Calu3 (cell line): ENCODE measurements at regions of chr2 and their contacts with region 1.

Region 1: DNA sequence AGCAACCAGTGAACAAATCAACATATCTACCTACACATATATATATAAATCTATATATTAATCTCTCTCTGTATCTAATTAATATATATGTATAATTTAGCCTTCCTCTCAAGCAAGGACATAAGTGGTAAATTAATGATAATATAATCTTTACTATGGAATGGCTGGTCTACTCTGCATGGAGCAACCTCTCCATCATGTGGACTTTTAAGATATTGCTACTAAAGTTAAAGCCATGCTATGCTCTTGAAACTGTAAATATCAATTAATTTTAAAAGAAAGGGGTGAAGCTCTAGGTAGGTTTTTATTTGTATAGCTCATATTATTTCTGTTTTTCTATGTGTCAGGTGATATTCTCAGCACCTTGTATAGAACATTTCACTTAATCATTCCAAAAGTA is 147.0 kb downstream of the PPP1R1C start:
- DNase-seq: no peak
- H3K4me3 Mint-ChIP-seq: no peak overlapping the region
- H3K27ac Mint-ChIP-seq: no peak overlapping the region
- H3K4me1 Mint-ChIP-seq: no peaks in the 10 kb centered on the region
- H3K27me3 Mint-ChIP-seq: no peaks in the 10 kb centered on the region
- CTCF ChIP-seq: peak; percentile 18

Region 2: DNA sequence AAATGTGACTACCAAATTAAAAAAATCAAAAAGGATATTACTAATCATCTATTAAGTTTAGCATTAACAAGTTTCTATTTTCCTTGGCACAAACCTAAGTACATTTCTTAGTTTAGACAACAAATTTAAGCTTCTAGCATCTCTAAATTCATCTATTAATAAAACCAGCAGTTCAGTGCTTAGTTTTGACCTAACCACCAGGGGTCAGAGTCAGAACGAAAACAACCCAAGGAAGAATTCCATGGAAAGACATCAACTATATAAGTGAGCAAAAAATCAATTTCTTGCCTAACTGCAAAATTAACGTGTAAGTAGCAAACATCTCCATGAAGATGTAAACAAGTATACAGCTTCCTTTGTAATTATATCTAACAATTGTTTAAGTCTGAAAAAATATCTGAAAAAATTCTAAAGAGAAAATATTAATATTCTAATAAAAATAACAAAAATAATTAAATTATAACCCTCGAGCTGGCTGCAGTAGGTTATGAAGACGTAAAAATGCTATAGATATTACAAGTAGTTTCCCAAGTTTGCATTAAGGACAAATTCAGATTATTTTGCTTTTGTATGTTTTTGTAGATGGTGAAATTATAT is 559.4 kb before region 1 on chr2:
- CTCF ChIA-PET with region 1: interaction called, 3 read pairs
- intact Hi-C with region 1: loop called (anchors 1 kb)
- DNase-seq: peak; percentile 52
- H3K4me3 Mint-ChIP-seq: no peak overlapping the region
- H3K27ac Mint-ChIP-seq: no peak overlapping the region
- H3K4me1 Mint-ChIP-seq: no peaks in the 10 kb centered on the region
- H3K27me3 Mint-ChIP-seq: no peaks in the 10 kb centered on the region
- CTCF ChIP-seq: peak; percentile 52

Region 3: DNA sequence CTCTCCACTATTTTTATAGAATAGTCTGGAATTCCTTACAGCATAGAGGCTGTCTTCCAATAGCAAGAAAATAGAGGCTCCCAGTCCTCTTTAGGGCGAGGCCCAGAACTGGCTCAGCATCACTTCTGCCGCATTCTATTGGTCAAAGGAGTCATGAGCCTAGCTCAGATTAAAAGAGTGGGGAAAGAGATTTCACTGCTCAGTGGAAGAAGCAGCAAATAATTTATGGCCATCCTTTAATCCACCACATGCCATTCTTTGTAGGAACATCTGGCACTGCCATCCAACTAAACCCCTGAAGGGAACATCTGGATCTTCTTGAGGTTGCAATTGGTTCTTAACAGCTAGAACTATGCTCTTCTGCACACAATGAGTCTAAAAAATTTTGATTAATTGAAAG is 408.9 kb before region 1 on chr2:
- CTCF ChIA-PET with region 1: no interaction called
- intact Hi-C with region 1: loop called (anchors 5 kb)
- DNase-seq: no peak
- H3K4me3 Mint-ChIP-seq: no peak overlapping the region
- H3K27ac Mint-ChIP-seq: no peak overlapping the region
- H3K4me1 Mint-ChIP-seq: no peaks in the 10 kb centered on the region
- H3K27me3 Mint-ChIP-seq: no peaks in the 10 kb centered on the region
- CTCF ChIP-seq: no peak

Region 4: DNA sequence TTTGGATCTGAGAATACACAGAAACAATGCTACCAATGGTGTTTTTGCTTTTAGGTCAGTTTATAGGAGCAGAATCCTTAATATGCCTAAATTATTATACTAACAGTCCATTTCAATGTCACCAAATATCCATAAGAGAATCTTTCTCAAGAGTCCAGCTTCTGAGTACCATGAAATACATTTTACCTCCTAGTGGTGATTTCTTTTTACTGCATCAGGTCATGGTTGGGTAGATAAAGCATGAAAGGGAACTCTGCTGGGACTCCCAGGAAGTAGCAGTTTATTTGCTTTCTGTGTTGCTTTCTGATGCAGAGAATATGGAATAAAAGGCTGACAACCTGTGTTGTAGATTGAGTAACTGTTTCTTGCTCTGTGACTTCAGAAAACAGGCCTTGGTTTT is 31.3 kb before region 1 on chr2:
- CTCF ChIA-PET with region 1: no interaction called
- intact Hi-C with region 1: no loop called
- DNase-seq: no peak
- H3K4me3 Mint-ChIP-seq: no peak overlapping the region
- H3K27ac Mint-ChIP-seq: no peak overlapping the region
- H3K4me1 Mint-ChIP-seq: no peaks in the 10 kb centered on the region
- H3K27me3 Mint-ChIP-seq: no peaks in the 10 kb centered on the region
- CTCF ChIP-seq: no peak